ENCODE measurements at regions of chr10 and their contacts with region 1.

Region 1: DNA sequence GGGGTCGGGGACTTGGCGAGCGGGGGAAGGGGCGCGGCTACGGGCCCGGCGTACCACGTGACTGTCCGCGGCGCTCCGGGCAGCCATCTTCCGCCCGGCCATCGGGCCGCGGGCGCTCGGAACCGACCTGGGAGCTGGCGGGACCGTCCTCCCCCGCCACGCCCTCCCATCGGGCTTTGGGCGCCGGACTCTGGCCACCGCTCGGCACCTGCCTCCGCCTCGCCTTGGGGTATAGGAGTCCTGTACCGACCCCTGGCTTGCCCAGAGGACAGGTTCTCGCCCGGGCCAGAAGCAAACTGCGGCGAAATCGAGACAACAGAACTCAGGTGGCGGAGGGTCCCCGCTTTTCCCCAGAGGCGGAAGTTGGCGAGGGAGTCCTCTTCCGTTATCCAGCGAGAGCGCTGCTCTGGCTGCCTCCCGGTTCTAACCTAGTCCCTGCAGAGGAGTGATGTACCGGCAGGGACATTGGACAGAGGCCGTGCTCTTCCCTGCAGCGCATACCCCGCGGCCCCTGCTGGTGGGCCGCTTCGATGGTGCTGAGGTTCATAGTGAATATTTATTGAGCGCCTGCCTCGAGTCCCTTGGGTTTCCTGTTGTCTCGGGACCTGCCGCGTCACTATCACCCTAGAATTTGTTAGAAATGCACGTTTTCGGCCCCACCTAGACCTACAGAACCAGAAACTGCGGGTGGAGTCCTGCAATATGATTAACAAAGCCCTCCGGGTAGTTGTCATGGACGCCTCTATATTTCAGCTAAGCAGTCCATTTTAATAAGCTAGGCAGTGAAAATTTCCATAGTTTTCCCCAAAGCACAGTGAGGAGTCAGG is 1.3 kb upstream of the SGMS1 start:
- DNase-seq: peak in 1 of 2 donors; percentile 85
- ATAC-seq: peak; percentile 74 to 81 (median 80)
- H3K4me3 ChIP-seq: peak overlapping the region; percentile 96
- H3K27ac ChIP-seq: peak overlapping the region; percentile 97
- H3K4me1 ChIP-seq: peaks cover 27% of the 10 kb centered on the region
- H3K27me3 ChIP-seq: no peaks in the 10 kb centered on the region
- CTCF ChIP-seq: peak; percentile 67

Region 2: DNA sequence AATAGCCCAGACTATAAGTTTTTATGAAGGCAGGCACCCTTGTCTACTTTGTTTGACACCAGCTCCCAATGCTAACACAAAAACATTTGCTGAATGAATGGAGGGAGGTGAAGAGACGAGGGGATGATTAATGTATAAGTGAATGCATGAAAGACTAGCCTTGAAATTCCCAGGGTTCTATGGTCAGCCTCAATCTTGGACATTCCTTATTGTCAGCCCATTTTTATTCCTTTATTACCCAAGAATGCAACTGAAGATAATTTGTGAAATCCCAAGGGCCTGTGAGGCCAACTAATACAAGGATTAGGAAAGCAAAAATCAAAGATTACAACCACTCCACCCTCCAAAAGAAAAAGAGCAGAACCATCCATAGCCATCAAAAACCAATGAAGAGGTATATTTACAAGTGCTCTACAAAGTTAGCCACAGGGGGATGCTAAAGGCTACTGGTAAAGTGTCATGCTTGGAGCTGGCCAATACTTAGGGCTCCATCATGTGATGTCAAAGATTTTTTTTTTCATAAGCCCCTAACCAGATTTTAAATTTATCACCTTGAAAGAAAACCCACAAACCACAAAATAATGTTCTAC is 333.7 kb before region 1 on chr10:
- intact Hi-C with region 1: loop called in 1 of 2 experiments (anchors 10 kb)
- DNase-seq: no peak
- ATAC-seq: peak in 2 of 4 donors; percentile 61 to 79
- H3K4me3 ChIP-seq: no peak overlapping the region
- H3K27ac ChIP-seq: no peak overlapping the region
- H3K4me1 ChIP-seq: no peaks in the 10 kb centered on the region
- H3K27me3 ChIP-seq: no peaks in the 10 kb centered on the region
- CTCF ChIP-seq: peak; percentile 39

Region 3: GRCh38 chr10:50325449-50326171 is 299.5 kb before region 1 on chr10:
- intact Hi-C with region 1: loop called in 1 of 2 experiments (anchors 5 kb)
- DNase-seq: peak; percentile 68 to 75
- ATAC-seq: peak; percentile 93 to 95 (median 94)
- H3K4me3 ChIP-seq: peak overlapping the region; percentile 61
- H3K27ac ChIP-seq: peak overlapping the region; percentile 77
- H3K4me1 ChIP-seq: peaks cover 45% of the 10 kb centered on the region
- H3K27me3 ChIP-seq: no peaks in the 10 kb centered on the region
- CTCF ChIP-seq: no peak

Region 4: GRCh38 chr10:50385624-50386023 is 239.5 kb before region 1 on chr10:
- intact Hi-C with region 1: loop called in 1 of 2 experiments (anchors 10 kb)
- DNase-seq: peak; percentile 18 to 68
- ATAC-seq: peak in 1 of 4 donors; percentile 36
- H3K4me3 ChIP-seq: no peak overlapping the region
- H3K27ac ChIP-seq: peak overlapping the region; percentile 71
- H3K4me1 ChIP-seq: peaks cover 37% of the 10 kb centered on the region
- H3K27me3 ChIP-seq: no peaks in the 10 kb centered on the region
- CTCF ChIP-seq: no peak

Region 5: GRCh38 chr10:50417886-50418830 is 206.9 kb before region 1 on chr10:
- intact Hi-C with region 1: loop called (anchors 5 to 10 kb)
- DNase-seq: peak; percentile 81 to 86
- ATAC-seq: peak; percentile 83 to 92 (median 88)
- H3K4me3 ChIP-seq: peak overlapping the region; percentile 83
- H3K27ac ChIP-seq: peak overlapping the region; percentile 79
- H3K4me1 ChIP-seq: peaks cover 29% of the 10 kb centered on the region
- H3K27me3 ChIP-seq: no peaks in the 10 kb centered on the region
- CTCF ChIP-seq: peak; percentile 14

Region 6: DNA sequence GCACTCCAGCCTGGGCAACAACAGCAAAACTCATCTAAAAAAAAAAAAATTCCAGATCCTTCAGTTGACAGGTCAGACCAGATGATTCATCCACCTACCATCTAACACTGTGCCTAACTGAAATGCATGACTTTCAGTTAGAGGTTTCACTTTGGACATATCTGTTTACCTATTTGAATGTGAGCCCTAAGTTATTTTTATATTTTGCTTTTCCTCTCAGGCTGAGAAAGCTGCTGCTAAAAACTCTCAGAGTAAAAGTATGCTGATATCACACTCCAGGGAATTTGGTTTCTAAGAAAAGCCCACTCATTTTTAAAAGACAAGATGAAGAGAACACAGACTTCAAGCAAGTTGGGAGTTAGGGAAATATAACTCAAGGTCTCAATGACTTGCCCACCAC is 127.3 kb before region 1 on chr10:
- intact Hi-C with region 1: loop called in 1 of 2 experiments (anchors 5 kb)
- DNase-seq: no peak
- ATAC-seq: peak; percentile 90 to 96 (median 92)
- H3K4me3 ChIP-seq: peak overlapping the region; percentile 23
- H3K27ac ChIP-seq: peak overlapping the region; percentile 73
- H3K4me1 ChIP-seq: peaks cover 23% of the 10 kb centered on the region
- H3K27me3 ChIP-seq: no peaks in the 10 kb centered on the region
- CTCF ChIP-seq: no peak

Region 7: GRCh38 chr10:50552771-50553535 is 72.1 kb before region 1 on chr10:
- intact Hi-C with region 1: loop called (anchors 5 kb)
- DNase-seq: no peak
- ATAC-seq: peak in 3 of 4 donors; percentile 43 to 57 (median 44)
- H3K4me3 ChIP-seq: no peak overlapping the region
- H3K27ac ChIP-seq: no peak overlapping the region
- H3K4me1 ChIP-seq: peaks cover 57% of the 10 kb centered on the region
- H3K27me3 ChIP-seq: no peaks in the 10 kb centered on the region
- CTCF ChIP-seq: peak; percentile 8